Posterior vena cava (tissue), 2 donors: ENCODE measurements at regions of chr5 and their contacts with region 1.

Region 1: DNA sequence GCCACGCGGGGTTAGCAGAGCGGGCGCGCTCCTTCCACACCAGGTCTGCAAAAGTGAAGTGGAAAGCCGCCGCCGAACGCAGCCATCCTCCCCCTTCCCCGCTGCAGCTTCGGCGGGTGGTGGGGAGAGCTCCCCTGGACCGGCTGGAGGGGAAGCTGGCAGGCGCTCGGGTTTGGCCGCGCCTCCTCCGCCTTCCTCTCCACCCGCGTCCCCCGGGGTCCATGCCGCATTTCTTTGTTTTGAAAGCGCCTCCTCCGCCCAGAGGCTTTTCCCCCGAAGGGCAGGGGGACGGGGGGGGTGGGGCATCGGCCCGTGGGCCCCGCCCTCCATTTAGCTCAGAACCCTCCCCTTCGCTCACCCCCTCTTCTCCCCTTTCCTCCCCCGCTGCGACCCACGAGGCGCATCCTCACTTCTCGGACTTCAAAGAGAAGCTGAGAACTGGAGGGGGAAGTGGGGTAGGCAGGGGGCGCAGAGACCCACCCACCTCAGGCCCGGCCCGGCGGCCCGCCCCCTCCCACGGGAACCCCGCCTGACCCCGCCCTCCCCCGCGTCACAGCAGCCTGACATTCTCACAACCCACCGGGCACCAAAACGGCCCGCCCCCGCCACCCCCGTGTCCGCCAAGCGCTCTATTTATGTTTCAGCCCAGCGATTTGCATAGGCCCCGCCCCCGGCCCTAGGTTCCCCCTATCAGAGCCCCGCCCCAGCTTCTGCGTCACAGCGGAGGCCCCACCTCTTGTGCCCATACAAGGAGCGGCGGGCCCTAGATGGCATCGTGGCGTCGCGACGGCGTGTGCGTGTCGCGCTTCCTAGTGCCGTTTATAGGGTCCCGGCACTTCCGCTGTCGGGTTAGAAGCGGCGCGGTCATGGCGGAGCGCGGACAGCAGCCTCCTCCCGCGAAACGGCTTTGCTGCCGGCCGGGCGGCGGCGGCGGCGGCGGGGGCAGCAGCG is at the start of gene ZSWIM6:
- DNase-seq: peak; percentile 100
- total RNA-seq, gene ZSWIM6: 14.0 to 15.3 TPM

Region 2: DNA sequence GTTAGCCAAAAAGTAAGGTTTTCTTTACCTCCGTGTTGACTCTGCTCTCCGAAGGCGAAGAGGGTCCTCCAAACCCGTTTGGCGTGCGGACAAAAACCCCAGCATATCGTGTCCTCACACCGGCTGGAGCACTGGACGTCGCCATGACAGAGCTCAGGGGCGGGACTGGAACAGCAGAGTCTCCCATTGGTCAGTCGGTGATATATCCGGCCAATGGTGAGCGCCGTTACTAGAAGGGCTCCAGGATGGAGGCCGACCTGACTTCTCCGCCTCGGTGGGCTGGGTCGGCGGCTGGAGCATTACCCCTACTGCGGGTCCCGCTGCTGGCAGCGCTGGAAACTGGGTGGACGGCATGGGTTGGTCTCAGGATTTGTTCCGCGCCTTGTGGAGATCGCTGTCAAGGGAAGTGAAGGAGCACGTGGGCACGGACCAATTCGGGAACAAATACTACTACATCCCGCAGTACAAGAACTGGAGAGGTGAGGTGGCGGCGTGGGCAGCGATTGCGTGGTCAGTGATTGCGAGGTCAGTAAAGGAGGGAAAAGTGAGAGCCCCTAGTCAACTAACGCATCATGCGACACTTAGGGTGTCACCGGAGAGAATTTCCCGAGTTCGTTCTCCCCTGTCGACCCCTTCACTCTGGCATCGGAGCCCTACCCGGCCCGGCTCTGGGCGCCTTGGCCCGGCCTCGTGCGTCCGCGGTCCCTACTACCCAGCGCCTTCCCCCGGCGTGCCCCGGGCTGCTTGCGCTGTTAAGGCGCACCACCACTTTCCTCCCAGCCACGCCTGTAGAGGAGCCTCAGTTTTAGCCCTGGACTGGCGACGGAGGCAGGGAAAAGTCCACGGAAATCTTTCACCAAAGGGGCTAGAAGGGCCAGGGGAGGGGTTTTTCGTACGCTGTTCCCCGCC is 386.5 kb before region 1 on chr5 and contains the starts of genes ERCC8 and NDUFAF2:
- intact Hi-C with region 1: loop called in 1 of 2 experiments (anchors 10 kb)
- DNase-seq: peak; percentile 96
- total RNA-seq, gene ERCC8: 9.4 to 12.2 TPM
- total RNA-seq, gene NDUFAF2: 28.3 to 45.0 TPM

Region 3: DNA sequence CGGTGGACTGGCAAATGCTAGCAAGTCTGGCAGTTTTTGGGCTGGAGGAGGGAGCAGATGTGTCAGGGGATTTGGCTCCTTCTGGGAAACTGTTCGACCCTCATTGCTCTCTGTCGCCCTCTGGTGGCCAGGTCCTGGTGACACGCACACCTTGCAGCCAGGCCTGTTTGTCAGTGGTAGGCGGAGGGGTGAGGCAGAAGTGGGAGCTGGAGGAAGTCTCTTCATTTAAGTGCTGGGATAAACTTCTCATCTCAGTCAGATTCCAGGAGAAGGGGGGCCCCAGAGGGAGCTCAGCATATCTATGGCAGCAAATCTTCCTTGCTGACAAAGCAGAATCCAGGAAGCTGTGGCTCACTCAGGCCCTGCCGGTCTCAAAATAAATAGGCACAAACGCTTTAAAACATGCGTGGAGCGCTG is 326.9 kb after region 1 on chr5:
- intact Hi-C with region 1: loop called (anchors 5 to 10 kb)
- DNase-seq: peak; percentile 91